ENCODE measurements at regions of chr15 and their contacts with region 1.

Region 1: GRCh38 chr15:78241007-78241406 is 6.6 kb upstream of the ACSBG1 start:
- DNase-seq: peak; percentile 79
- H3K4me3 Mint-ChIP-seq: no peak overlapping the region
- H3K27ac Mint-ChIP-seq: no peak overlapping the region
- H3K4me1 Mint-ChIP-seq: peaks cover 5% of the 10 kb centered on the region
- H3K27me3 Mint-ChIP-seq: no peaks in the 10 kb centered on the region
- CTCF ChIP-seq: peak; percentile 92

Region 2: GRCh38 chr15:77901974-77902750 is 338.8 kb before region 1 on chr15:
- CTCF ChIA-PET with region 1: no interaction called
- POLR2A ChIA-PET with region 1: no interaction called
- intact Hi-C with region 1: loop called (anchors 5 kb)
- DNase-seq: no peak
- H3K4me3 Mint-ChIP-seq: no peak overlapping the region
- H3K27ac Mint-ChIP-seq: no peak overlapping the region
- H3K4me1 Mint-ChIP-seq: no peaks in the 10 kb centered on the region
- H3K27me3 Mint-ChIP-seq: peaks cover 14% of the 10 kb centered on the region
- CTCF ChIP-seq: peak; percentile 6

Region 3: DNA sequence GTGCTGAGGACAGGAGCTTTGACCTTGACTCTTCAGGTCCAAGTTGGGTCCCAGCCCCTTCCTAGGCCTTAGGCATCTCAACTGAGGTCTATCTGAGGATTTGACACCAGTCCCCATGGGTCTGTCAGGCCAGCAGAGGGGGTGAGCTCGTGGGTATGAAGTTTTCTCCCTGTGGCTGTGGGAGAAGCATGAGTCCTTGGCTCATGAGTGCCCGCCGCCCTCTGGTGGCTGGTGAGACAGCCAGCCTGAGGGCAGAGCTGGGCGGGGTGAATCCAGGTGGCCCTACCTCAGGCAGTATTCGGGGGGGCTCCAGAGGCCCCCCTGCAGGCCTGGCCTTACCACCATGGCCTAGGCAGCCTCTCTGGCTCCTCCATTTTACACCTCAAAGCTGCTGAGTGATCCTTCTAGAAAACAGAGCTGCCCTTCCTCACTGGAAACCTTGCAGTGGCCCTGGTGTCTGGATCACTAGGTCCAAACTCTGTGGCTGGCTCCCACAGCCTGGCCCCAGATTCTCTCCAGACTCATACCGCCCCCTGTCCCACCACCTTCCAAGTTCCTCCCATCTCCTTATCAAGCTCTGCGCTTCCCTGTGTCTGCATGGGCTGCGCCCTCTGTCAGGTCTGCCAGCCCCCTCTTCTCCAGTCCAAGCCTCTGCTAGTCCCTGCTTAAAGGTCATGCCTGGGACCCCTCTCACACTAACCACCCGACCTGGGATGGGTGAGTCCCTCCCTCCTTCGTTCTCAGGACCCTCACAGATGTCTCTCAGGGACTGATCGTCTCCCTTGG is 132.5 kb before region 1 on chr15:
- CTCF ChIA-PET with region 1: interaction called, 173 read pairs
- POLR2A ChIA-PET with region 1: interaction called, 5 read pairs
- intact Hi-C with region 1: loop called (anchors 1 kb)
- DNase-seq: peak; percentile 84
- H3K4me3 Mint-ChIP-seq: no peak overlapping the region
- H3K27ac Mint-ChIP-seq: no peak overlapping the region
- H3K4me1 Mint-ChIP-seq: no peaks in the 10 kb centered on the region
- H3K27me3 Mint-ChIP-seq: no peaks in the 10 kb centered on the region
- CTCF ChIP-seq: peak; percentile 90

Region 4: GRCh38 chr15:78155355-78155939 is 85.6 kb before region 1 on chr15:
- CTCF ChIA-PET with region 1: interaction called, 10 read pairs
- POLR2A ChIA-PET with region 1: no interaction called
- intact Hi-C with region 1: no loop called
- DNase-seq: no peak
- H3K4me3 Mint-ChIP-seq: peak overlapping the region; percentile 7
- H3K27ac Mint-ChIP-seq: no peak overlapping the region
- H3K4me1 Mint-ChIP-seq: peaks cover 35% of the 10 kb centered on the region
- H3K27me3 Mint-ChIP-seq: no peaks in the 10 kb centered on the region
- CTCF ChIP-seq: no peak

Region 5: GRCh38 chr15:78195735-78196201 is 45.2 kb before region 1 on chr15:
- CTCF ChIA-PET with region 1: interaction called, 41 read pairs
- POLR2A ChIA-PET with region 1: no interaction called
- intact Hi-C with region 1: loop called (anchors 1 kb)
- DNase-seq: peak; percentile 50
- H3K4me3 Mint-ChIP-seq: no peak overlapping the region
- H3K27ac Mint-ChIP-seq: no peak overlapping the region
- H3K4me1 Mint-ChIP-seq: no peaks in the 10 kb centered on the region
- H3K27me3 Mint-ChIP-seq: peaks cover 16% of the 10 kb centered on the region
- CTCF ChIP-seq: peak; percentile 66

Region 6: GRCh38 chr15:78225783-78226541 is 15.0 kb before region 1 on chr15:
- CTCF ChIA-PET with region 1: interaction called, 23 read pairs
- POLR2A ChIA-PET with region 1: interaction called, 5 read pairs
- intact Hi-C with region 1: no loop called
- DNase-seq: peak; percentile 70
- H3K4me3 Mint-ChIP-seq: no peak overlapping the region
- H3K27ac Mint-ChIP-seq: no peak overlapping the region
- H3K4me1 Mint-ChIP-seq: peaks cover 14% of the 10 kb centered on the region
- H3K27me3 Mint-ChIP-seq: no peaks in the 10 kb centered on the region
- CTCF ChIP-seq: no peak

Measured in MCF 10A (cell line).